Activated CD4-positive, alpha-beta T cell treated with anti-CD3 and anti-CD28 coated beads for 36 hours (primary cell): ENCODE measurements at regions of chr4 and their contacts with region 1.

Region 1: GRCh38 chr4:142567199-142567598 is 278.9 kb downstream of the INPP4B start:
- DNase-seq: peak; percentile 73
- ATAC-seq: peak; percentile 79
- H3K4me3 Mint-ChIP-seq: peak overlapping the region; percentile 88
- H3K27ac Mint-ChIP-seq: peak overlapping the region; percentile 95
- H3K4me1 Mint-ChIP-seq: peaks cover 64% of the 10 kb centered on the region
- H3K27me3 Mint-ChIP-seq: no peaks in the 10 kb centered on the region

Region 2: DNA sequence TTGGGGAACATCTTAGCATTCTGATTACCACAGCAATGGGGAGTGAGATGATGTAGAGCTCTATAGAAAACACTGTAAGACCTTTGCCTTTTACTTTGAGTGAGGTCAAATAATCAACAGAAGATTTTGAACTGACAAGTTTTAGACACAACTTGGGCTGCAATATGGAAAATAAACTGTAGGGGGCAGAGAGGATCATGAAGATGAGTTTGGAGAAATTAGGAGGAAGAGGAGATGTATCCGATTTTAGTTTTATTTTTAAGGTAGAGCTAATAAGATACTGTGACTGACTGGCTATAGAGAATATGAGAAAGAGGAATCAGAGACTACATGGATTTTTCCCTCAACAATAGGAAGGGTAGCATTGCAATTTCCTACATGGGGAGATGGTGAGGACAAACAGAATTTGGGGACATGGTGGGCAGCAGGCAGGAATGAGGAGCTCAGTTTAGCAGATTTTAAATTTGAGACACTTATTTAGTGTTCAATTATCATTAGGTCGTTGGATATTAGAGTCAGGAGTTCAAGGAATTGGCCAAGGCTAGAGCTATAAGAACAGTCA is 284.2 kb before region 1 on chr4:
- CTCF ChIA-PET with region 1: no interaction called
- POLR2A ChIA-PET with region 1: no interaction called
- intact Hi-C with region 1: loop called in 1 of 2 experiments (anchors 5 kb)
- DNase-seq: no peak
- ATAC-seq: no peak
- H3K4me3 Mint-ChIP-seq: no peak overlapping the region
- H3K27ac Mint-ChIP-seq: no peak overlapping the region
- H3K4me1 Mint-ChIP-seq: peaks cover 23% of the 10 kb centered on the region
- H3K27me3 Mint-ChIP-seq: no peaks in the 10 kb centered on the region

Region 3: DNA sequence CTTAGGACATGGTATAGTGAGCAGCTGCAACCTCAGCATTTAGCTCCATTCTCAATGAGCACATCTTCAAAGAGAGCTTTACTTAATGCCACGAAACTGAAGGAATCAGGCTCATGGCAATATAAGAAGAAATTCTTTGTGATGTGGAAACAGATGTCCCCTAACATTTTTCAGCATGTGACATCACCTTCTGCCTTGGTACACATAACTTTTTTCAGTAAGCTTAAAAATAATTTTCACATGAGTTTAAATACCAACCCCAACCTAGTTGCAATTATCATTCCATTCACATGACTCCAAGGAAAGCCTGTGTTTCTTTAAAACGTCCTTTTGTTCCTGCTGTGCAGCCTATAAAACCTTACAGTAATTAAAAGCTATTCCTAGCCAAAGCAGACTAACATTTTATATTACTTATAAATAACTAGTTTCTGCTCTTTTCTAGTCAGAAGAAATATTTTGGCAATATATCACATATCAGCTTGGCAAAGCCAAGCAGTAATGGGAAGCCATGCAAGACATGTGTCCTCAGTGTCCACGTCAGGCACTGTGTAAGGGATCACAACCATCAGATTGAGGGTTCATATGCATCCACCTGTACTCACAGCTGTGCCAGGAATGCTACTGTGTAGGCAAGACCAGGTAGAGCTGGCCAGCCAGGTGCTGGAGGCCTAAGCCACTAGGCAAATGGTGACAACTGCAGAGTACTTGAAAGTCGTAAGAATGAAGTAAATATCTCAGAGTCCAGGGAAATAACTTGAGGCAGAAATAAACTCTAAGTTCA is 187.7 kb before region 1 on chr4:
- CTCF ChIA-PET with region 1: interaction called, 3 read pairs
- POLR2A ChIA-PET with region 1: no interaction called
- intact Hi-C with region 1: loop called (anchors 1 kb)
- DNase-seq: no peak
- ATAC-seq: no peak
- H3K4me3 Mint-ChIP-seq: no peak overlapping the region
- H3K27ac Mint-ChIP-seq: peak overlapping the region; percentile 93
- H3K4me1 Mint-ChIP-seq: peaks cover 83% of the 10 kb centered on the region
- H3K27me3 Mint-ChIP-seq: no peaks in the 10 kb centered on the region

Region 4: GRCh38 chr4:142416711-142417275 is 150.4 kb before region 1 on chr4:
- CTCF ChIA-PET with region 1: interaction called, 8 read pairs
- POLR2A ChIA-PET with region 1: interaction called, 13 read pairs
- intact Hi-C with region 1: no loop called
- DNase-seq: no peak
- ATAC-seq: peak; percentile 92
- H3K4me3 Mint-ChIP-seq: peak overlapping the region; percentile 57
- H3K27ac Mint-ChIP-seq: peak overlapping the region; percentile 98
- H3K4me1 Mint-ChIP-seq: peaks cover 81% of the 10 kb centered on the region
- H3K27me3 Mint-ChIP-seq: no peaks in the 10 kb centered on the region

Region 5: GRCh38 chr4:142463206-142463605 is 104.0 kb before region 1 on chr4:
- CTCF ChIA-PET with region 1: no interaction called
- POLR2A ChIA-PET with region 1: no interaction called
- intact Hi-C with region 1: no loop called
- DNase-seq: no peak
- ATAC-seq: no peak
- H3K4me3 Mint-ChIP-seq: no peak overlapping the region
- H3K27ac Mint-ChIP-seq: no peak overlapping the region
- H3K4me1 Mint-ChIP-seq: peaks cover 6% of the 10 kb centered on the region
- H3K27me3 Mint-ChIP-seq: no peaks in the 10 kb centered on the region

Region 6: DNA sequence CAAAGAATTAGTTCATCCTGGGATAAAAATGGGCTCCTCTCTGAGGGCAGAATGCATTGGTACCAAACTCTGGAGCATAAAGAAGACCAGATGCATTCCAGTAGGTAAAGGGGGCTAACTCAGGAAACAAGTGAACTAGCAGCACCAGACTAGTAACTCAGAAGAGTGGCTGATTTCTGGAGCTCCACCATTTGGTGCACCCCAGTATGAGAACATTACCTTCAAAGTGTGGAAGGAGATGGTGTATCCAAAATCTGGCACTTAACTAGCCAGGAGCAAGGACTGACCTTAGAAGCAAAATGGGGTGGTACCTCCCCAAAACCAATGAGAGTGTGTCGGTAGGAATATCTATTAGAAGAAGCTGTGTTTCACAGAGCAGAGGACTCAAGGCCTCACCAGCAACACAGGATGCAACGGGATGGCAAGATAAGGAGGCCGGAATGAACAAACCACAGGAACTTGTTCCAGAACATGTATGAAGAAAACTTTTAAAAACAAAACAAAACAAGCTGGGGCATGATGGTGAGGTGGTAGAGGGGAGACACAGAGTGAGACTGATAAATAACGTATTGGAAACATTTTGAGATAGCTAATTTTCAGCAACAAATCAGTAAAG is 136.6 kb after region 1 on chr4:
- CTCF ChIA-PET with region 1: no interaction called
- POLR2A ChIA-PET with region 1: no interaction called
- intact Hi-C with region 1: loop called in 1 of 2 experiments (anchors 5 kb)
- DNase-seq: peak; percentile 34
- ATAC-seq: peak; percentile 40
- H3K4me3 Mint-ChIP-seq: no peak overlapping the region
- H3K27ac Mint-ChIP-seq: no peak overlapping the region
- H3K4me1 Mint-ChIP-seq: peaks cover 32% of the 10 kb centered on the region
- H3K27me3 Mint-ChIP-seq: no peaks in the 10 kb centered on the region

Region 7: DNA sequence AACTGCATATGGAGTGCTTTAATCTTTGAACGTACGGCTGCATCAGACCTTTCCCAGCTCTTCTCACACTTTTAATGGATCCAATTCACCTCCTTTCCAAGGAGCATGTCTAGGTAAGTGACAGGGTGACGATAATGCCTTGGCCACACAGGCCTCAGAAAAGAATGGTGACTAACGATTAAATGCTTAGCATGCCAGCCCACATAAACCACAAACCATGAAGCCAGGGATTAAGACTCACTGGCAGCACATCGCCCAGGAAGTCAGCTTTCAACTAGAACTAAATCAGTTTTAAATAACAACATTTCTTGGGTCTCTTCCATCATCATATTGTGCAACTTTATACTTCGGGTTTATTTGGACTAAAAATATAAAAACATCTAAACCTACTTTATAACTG is 250.2 kb after region 1 on chr4:
- CTCF ChIA-PET with region 1: interaction called, 4 read pairs
- POLR2A ChIA-PET with region 1: no interaction called
- intact Hi-C with region 1: loop called in 1 of 2 experiments (anchors 5 kb)
- DNase-seq: peak; percentile 77
- ATAC-seq: peak; percentile 88
- H3K4me3 Mint-ChIP-seq: peak overlapping the region; percentile 18
- H3K27ac Mint-ChIP-seq: peak overlapping the region; percentile 82
- H3K4me1 Mint-ChIP-seq: peaks cover 32% of the 10 kb centered on the region
- H3K27me3 Mint-ChIP-seq: no peaks in the 10 kb centered on the region

Region 8: DNA sequence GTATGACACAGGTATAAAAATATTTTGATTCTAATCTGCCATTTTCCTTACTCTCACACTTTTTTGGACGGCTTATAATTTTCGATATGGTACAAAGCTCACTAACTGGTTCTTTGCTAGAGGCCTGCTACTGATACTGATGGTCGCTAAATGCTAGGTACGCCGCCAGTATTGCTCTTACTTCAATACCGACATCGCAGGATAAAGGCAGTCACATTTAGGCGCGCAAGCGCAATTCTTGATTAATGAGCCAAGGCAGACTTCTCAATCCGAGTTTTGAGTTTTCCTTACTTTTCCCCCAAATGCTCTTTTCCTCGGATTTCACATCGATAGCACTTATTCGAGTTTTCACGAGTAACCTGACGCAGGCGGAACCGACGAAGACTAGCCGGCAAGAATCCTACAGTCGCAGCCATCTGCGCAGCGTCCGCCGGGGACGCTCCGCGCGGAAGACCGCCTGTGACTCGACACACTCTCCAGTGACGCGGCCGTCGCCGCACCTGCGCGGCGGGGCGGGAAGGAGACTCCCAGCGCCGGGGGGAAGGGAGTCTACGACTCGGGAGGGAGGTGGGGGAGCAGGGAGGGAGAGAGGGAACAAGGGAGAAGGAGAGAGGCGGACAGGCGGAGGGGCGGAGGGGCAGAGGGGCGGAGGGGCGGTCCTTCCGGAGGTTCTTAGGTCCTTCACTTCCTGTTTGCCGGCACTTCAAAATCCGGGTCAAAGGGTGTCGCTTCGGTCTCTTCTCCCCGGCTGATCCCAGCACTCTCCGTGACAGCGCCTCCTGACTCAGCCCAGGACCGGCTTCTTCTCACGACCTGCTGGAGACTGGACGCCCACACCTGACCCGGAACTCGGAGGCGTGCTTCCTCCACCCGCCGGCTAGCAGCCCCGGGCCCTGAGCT is 617.3 kb after region 1 on chr4 and contains the start of gene USP38:
- CTCF ChIA-PET with region 1: no interaction called
- POLR2A ChIA-PET with region 1: no interaction called
- intact Hi-C with region 1: loop called (anchors 2 to 10 kb)
- DNase-seq: peak; percentile 95
- ATAC-seq: peak; percentile 90
- H3K4me3 Mint-ChIP-seq: peak within 1 kb of the TSS; percentile 85
- H3K27ac Mint-ChIP-seq: peak within 1 kb of the TSS; percentile 97
- H3K4me1 Mint-ChIP-seq: peaks cover 38% of the 10 kb centered on the region
- H3K27me3 Mint-ChIP-seq: no peaks in the 10 kb centered on the region
- total RNA-seq, gene USP38: 17.4 to 20.0 TPM

Region 9: DNA sequence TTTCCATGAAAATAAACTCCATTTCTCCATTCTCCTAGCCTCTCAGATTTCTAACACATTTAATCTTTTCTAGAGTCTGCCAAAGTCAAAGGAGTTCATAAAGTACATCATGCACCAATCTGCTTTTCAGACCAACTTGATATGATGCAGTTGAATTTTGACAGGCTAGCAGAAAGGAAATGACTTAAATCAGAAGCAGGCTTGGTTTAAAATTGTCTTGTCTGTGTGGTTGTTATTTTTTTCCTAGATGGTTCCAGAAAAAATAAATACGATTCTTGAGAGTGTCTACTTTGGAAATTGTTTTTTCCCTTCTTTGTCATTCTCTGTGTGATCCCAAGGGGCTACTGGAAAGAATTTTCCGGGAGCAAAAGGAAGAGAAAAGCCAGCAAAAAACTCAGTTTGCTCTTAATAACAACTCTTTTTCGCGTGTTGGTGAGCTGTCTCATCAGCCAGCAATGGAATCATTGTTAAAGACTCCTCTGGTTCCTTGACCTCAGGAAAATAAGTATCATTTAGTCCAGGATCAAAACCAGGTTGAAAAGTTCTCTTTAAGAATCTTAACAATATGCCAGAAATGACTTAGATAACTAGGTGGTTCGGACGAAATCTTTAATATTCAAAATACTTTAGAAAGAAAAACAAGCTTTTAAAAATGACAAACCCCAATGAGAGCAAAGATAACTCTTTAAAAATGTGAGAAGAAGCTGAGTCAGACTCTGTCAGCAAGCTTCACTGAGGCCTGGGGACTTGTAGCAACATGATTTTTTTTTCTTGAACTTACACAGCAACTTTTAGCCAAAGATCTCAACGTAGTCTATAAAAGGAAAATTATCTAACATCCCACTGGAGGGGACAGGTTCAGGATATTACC is 719.7 kb after region 1 on chr4:
- CTCF ChIA-PET with region 1: no interaction called
- POLR2A ChIA-PET with region 1: no interaction called
- intact Hi-C with region 1: no loop called
- DNase-seq: no peak
- ATAC-seq: no peak
- H3K4me3 Mint-ChIP-seq: no peak overlapping the region
- H3K27ac Mint-ChIP-seq: no peak overlapping the region
- H3K4me1 Mint-ChIP-seq: no peaks in the 10 kb centered on the region
- H3K27me3 Mint-ChIP-seq: peaks cover 2% of the 10 kb centered on the region